Activated T-helper 1 cell treated with anti-CD3 and anti-CD28 coated beads, Interleukin-12 subunit alpha, Interleukin-12 subunit beta, Interleukin-2, Interleukin-4 antibody, amounts not matched to agents 30 ng/mL and 10 ng/mL and 1 ng/mL, durations not matched to agents 14 hours and 24 hours and 36 hours (primary cell): ENCODE measurements at regions of chr11 and their contacts with region 1.

Region 1: GRCh38 chr11:18775492-18776292 is 15.9 kb downstream of the PTPN5 start:
- DNase-seq: peak; percentile 40
- H3K4me3 Mint-ChIP-seq: no peak overlapping the region
- H3K27ac Mint-ChIP-seq: no peak overlapping the region
- H3K4me1 Mint-ChIP-seq: peaks cover 15% of the 10 kb centered on the region
- H3K27me3 Mint-ChIP-seq: peaks cover 4% of the 10 kb centered on the region

Region 2: DNA sequence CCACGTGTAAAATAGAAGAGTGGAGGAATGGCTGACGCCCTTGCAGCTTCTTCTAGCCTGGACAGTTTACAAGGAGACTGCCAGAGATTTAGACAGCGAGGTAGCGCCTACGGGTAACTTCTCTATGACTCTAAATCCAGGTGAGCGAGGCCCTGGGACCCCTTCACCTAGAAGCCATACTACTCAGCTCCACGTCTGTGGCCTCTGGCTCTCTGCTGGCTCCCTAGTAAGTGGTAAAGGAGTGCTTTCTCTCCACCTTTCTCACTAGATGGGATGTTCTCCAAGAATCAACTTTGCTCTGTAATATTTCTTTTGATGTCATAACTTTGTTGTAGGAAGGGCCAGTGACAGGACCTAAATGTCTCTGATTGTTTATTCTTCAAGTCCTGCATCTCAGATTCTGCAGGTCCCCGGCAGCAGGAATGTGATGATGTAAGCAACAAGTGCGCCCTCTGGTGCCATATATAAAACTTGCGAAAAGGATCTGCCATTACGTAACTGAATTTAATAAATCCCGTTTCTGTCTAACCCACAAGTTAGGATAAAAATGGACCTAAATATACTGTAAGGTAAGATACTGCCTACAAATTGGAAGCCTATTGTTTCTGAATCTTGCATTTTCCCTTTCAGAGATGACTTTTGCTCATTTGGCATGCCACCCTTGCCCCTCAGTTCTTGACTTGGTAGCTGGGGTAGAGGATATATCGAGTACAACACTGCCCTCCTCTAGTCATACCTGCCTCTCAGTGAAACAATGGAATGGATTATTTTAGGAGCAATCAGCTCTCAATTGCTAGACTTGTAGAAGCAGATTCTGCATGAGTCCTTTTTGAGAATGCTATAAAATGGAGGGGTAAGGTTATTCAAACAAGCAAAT is 26.9 kb after region 1 on chr11:
- intact Hi-C with region 1: loop called (anchors 1 kb)
- DNase-seq: peak; percentile 19
- H3K4me3 Mint-ChIP-seq: no peak overlapping the region
- H3K27ac Mint-ChIP-seq: no peak overlapping the region
- H3K4me1 Mint-ChIP-seq: no peaks in the 10 kb centered on the region
- H3K27me3 Mint-ChIP-seq: peaks cover 20% of the 10 kb centered on the region

Region 3: DNA sequence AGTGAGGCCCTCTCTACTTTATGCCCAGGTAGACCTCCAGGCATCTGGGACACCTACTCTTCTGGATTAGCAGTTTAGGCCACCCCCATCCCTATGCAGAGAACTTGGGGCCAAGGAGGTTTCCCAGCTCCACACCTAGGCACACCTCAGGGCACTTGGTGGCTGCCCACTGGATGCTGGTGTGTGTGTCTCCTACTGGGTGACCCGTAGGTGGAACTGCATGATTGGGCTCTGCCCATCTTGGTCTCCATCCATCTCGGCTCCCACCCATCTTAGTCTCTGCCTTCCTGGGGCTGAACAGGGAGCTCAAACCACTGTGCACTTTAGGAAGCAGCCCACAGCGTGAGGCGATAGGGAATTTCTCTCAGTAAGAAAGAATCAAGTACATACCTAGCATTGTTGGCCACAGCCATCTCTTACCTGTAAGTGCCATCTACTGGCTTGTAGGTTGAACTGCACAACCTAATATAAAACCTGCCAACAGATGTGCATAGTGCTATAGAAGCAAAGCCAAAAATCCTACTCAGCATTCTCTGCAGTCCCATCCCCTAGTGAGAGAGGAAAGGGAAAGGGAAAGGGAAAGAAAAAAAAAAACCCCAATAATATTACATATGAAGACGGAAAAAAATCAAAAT is 77.5 kb after region 1 on chr11:
- intact Hi-C with region 1: loop called (anchors 1 kb)
- DNase-seq: no peak
- H3K4me3 Mint-ChIP-seq: no peak overlapping the region
- H3K27ac Mint-ChIP-seq: no peak overlapping the region
- H3K4me1 Mint-ChIP-seq: no peaks in the 10 kb centered on the region
- H3K27me3 Mint-ChIP-seq: peaks cover 18% of the 10 kb centered on the region

Region 4: GRCh38 chr11:18907391-18907790 is 131.7 kb after region 1 on chr11:
- intact Hi-C with region 1: no loop called
- DNase-seq: no peak
- H3K4me3 Mint-ChIP-seq: no peak overlapping the region
- H3K27ac Mint-ChIP-seq: no peak overlapping the region
- H3K4me1 Mint-ChIP-seq: no peaks in the 10 kb centered on the region
- H3K27me3 Mint-ChIP-seq: peaks cover 3% of the 10 kb centered on the region